ENCODE measurements at regions of chr1 and their contacts with region 1.

Region 1: GRCh38 chr1:225467193-225468020 is 39.6 kb upstream of the LBR start:
- DNase-seq: peak; percentile 67 to 94 (median 79)
- ATAC-seq: peak; percentile 85
- H3K4me3 ChIP-seq: peak overlapping the region; percentile 79
- H3K4me3 Mint-ChIP-seq: peak overlapping the region; percentile 96
- H3K27ac ChIP-seq: peak overlapping the region; percentile 92 to 94
- H3K27ac Mint-ChIP-seq: peak overlapping the region; percentile 99
- H3K4me1 ChIP-seq: peaks cover 56% of the 10 kb centered on the region
- H3K4me1 Mint-ChIP-seq: peaks cover 40% of the 10 kb centered on the region
- H3K27me3 ChIP-seq: no peaks in the 10 kb centered on the region
- H3K27me3 Mint-ChIP-seq: no peaks in the 10 kb centered on the region
- CTCF ChIP-seq: no peak

Region 2: DNA sequence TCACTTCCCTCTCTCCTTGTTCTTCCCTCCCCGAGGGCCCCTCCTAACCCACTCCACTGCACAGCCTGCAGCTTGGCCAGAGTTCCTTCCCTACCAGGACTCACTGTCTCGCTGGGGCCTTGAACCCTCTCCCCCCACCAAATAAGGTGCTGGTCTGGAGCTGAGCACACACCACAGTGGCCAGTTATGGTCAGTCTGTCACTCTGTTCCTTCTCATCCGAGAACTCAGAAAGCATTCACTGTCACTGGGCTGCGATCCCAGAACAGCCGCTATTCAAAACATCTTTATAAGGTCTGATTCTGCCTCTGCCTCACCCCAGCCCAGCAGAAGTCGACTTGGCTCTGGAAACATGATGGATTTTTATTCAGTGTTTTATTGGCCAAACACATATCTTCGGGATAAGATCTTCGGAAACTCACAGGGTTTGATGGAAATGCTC is 19.7 kb before region 1 on chr1:
- CTCF ChIA-PET with region 1: interaction called, 5 read pairs
- POLR2A ChIA-PET with region 1: interaction called, 152 read pairs
- intact Hi-C with region 1: loop called in 1 of 2 experiments (anchors 1 kb)
- DNase-seq: no peak
- ATAC-seq: no peak
- H3K4me3 ChIP-seq: no peak overlapping the region
- H3K4me3 Mint-ChIP-seq: no peak overlapping the region
- H3K27ac ChIP-seq: no peak overlapping the region
- H3K27ac Mint-ChIP-seq: peak overlapping the region; percentile 51
- H3K4me1 ChIP-seq: peaks cover 59% of the 10 kb centered on the region
- H3K4me1 Mint-ChIP-seq: peaks cover 49% of the 10 kb centered on the region
- H3K27me3 ChIP-seq: no peaks in the 10 kb centered on the region
- H3K27me3 Mint-ChIP-seq: no peaks in the 10 kb centered on the region
- CTCF ChIP-seq: no peak

Region 3: GRCh38 chr1:225923692-225924555 is 456.5 kb after region 1 on chr1 and contains the start of gene PYCR2:
- CTCF ChIA-PET with region 1: no interaction called
- POLR2A ChIA-PET with region 1: interaction called, 14 read pairs
- intact Hi-C with region 1: loop called in 1 of 2 experiments (anchors 5 kb)
- DNase-seq: peak; percentile 87 to 98 (median 93)
- ATAC-seq: peak; percentile 98
- H3K4me3 ChIP-seq: peak within 1 kb of the TSS; percentile 95
- H3K4me3 Mint-ChIP-seq: peak within 1 kb of the TSS; percentile 95
- H3K27ac ChIP-seq: peak within 1 kb of the TSS; percentile 79 to 89
- H3K27ac Mint-ChIP-seq: peak within 1 kb of the TSS; percentile 98
- H3K4me1 ChIP-seq: peaks cover 74% of the 10 kb centered on the region
- H3K4me1 Mint-ChIP-seq: peaks cover 54% of the 10 kb centered on the region
- H3K27me3 ChIP-seq: no peaks in the 10 kb centered on the region
- H3K27me3 Mint-ChIP-seq: no peaks in the 10 kb centered on the region
- CTCF ChIP-seq: no peak
- total RNA-seq, gene PYCR2: 24.1 to 26.2 TPM